A673 (cell line): ENCODE measurements at regions of chr13 and their contacts with region 1.

Region 1: GRCh38 chr13:61253105-61253877 is 162.4 kb downstream of the PCDH20 start:
- DNase-seq: no peak
- H3K4me3 ChIP-seq: no peak overlapping the region
- H3K27ac ChIP-seq: no peak overlapping the region
- H3K4me1 ChIP-seq: peaks cover 15% of the 10 kb centered on the region
- H3K27me3 ChIP-seq: no peaks in the 10 kb centered on the region
- CTCF ChIP-seq: no peak

Region 2: GRCh38 chr13:61123538-61124289 is 129.6 kb before region 1 on chr13:
- CTCF ChIA-PET with region 1: interaction called, 6 read pairs
- POLR2A ChIA-PET with region 1: no interaction called
- intact Hi-C with region 1: loop called (anchors 2 kb)
- DNase-seq: no peak
- H3K4me3 ChIP-seq: no peak overlapping the region
- H3K27ac ChIP-seq: no peak overlapping the region
- H3K4me1 ChIP-seq: peaks cover 2% of the 10 kb centered on the region
- H3K27me3 ChIP-seq: no peaks in the 10 kb centered on the region
- CTCF ChIP-seq: no peak

Region 3: DNA sequence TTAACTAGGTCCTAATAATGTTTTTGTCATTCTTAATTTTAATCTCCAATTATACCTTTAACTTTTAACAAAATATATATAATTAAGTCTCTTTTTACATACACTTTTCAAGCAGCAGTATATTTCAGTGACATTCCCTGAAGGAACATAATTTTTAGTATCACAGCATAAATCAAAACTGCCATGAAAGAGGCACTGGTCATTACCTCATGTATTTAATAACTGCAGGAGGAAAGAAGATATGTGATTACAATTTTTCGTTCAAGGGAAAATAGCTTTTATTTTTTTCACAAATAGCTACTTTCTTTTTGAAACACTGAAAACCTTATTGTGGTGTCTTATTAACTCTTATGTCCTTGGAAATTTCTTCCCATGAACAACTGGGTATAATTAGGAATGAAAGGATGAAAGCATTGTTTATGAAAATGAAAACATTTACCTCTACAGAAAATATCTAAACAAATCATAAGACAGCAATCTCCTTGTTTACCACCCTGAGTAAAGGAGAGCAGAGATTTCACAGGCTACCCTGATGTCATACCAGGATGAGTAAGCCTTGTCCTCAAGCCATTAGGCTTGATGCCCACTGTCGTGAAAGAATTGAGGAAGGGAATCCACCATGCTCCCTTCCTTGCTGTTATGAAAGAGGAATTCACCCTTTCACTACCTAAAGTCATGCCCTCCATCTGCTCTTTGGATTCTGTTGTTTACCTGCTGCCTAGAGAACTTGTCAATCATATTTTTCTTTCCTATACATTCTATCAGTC is 1039.6 kb after region 1 on chr13:
- CTCF ChIA-PET with region 1: no interaction called
- POLR2A ChIA-PET with region 1: no interaction called
- intact Hi-C with region 1: no loop called
- DNase-seq: no peak
- H3K4me3 ChIP-seq: no peak overlapping the region
- H3K27ac ChIP-seq: no peak overlapping the region
- H3K4me1 ChIP-seq: no peaks in the 10 kb centered on the region
- H3K27me3 ChIP-seq: no peaks in the 10 kb centered on the region
- CTCF ChIP-seq: no peak